HepG2 (cell line): ENCODE measurements at regions of chr1 and their contacts with region 1.

Region 1: DNA sequence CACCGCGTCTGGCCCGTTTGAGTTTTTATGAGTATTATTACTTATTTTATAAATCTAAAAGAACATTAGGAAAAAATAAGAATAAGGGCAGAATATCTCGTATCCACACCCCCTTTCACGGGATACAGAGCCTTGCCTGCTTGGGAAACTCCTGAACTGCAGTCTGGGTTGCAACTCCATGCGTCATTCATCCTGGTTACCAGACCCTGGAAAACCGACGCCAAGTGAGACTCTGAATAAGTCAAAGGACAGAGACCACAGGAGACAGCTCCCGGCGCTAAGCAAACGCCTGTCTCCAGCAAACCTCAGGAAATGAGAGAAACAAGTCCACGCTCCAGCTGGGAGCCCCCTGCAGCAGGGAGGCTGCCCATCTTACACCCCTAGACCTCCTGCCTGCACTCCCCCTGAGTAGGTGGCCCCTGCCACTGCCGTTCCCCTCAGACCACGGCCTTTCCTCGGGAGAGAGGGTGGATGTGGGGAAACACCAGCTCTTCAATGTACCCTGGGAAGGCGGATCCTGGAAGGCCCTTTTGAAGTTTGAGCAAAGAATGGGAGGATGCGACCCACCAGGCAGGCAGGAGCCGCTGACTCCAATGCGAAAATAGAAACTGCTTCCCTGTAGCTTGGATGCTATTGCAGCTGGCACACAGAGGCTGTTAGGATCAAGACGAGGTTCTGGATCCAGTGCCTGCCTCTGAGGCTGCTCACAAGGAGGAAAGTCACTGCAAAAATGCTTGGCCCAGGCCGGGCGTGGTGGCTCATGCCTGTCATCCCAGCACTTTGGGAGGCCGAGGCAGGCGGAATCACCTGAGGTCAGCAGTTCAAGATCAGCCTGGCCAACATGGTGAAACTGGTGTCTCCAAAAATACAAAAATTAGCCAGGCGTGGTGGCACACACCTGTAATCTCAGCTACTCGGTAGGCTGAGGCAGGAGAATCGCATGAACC is 37.7 kb upstream of the GPR157 start:
- DNase-seq: no peak
- ATAC-seq: no peak
- H3K4me3 ChIP-seq: no peak overlapping the region
- H3K27ac ChIP-seq: no peak overlapping the region
- H3K4me1 ChIP-seq: peaks cover 81% of the 10 kb centered on the region
- H3K27me3 ChIP-seq: no peaks in the 10 kb centered on the region
- CTCF ChIP-seq: no peak
- EP300 ChIP-seq: no peak
- POLR2A ChIP-seq: no peak
- RAD21 ChIP-seq: no peak

Region 2: GRCh38 chr1:9181176-9181906 is 14.8 kb after region 1 on chr1:
- CTCF ChIA-PET with region 1: no interaction called
- POLR2A ChIA-PET with region 1: interaction called, 24 read pairs
- in situ Hi-C with region 1: no loop called
- intact Hi-C with region 1: no loop called
- DNase-seq: peak; percentile 61
- ATAC-seq: peak; percentile 74
- H3K4me3 ChIP-seq: peak overlapping the region; percentile 88 to 94 (median 92)
- H3K27ac ChIP-seq: peak overlapping the region; percentile 92
- H3K4me1 ChIP-seq: peaks cover 71% of the 10 kb centered on the region
- H3K27me3 ChIP-seq: no peaks in the 10 kb centered on the region; a peak in 1 of 5 replicates
- CTCF ChIP-seq: peak; percentile 99
- EP300 ChIP-seq: no peak
- POLR2A ChIP-seq: peak in 1 of 2 experiments; percentile 37; a peak in 1 of 4 replicates
- RAD21 ChIP-seq: peak; percentile 77

Region 3: GRCh38 chr1:9321480-9321849 is 154.9 kb after region 1 on chr1:
- CTCF ChIA-PET with region 1: no interaction called
- POLR2A ChIA-PET with region 1: no interaction called
- in situ Hi-C with region 1: no loop called
- intact Hi-C with region 1: no loop called
- DNase-seq: no peak
- ATAC-seq: no peak
- H3K4me3 ChIP-seq: no peak overlapping the region
- H3K27ac ChIP-seq: no peak overlapping the region
- H3K4me1 ChIP-seq: no peaks in the 10 kb centered on the region; the same call in 1 of the 2 replicates
- H3K27me3 ChIP-seq: no peaks in the 10 kb centered on the region
- CTCF ChIP-seq: no peak
- EP300 ChIP-seq: no peak
- POLR2A ChIP-seq: no peak
- RAD21 ChIP-seq: no peak